ENCODE measurements at regions of chr14 and their contacts with region 1.

Region 1: DNA sequence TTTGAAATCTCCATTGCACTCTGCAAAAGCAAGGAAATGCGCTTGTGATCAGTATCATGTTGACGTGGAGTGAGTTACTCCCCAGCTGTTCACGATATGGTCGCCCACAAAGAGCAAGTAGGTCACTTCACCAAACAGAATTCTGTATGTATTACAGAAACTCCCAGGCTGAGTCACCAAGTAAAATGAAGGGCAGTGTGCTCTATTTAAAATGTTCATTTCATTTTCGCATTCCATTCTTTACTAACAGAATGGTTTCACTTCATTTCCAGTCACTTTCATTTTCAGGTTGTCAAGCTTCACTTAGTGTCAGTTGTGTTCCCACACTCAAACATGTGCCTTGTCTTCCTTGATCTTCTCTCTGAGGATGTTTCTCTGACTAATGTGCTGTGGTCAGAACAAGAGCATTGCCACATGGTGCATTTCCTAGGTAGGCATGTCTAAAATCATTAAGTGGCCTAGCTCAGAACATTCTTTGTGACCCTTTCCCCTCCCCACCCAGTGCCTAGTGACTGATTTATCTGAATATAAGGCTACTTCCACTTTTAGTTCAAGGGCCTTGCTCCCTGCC is 391.2 kb downstream of the RAD51B start:
- DNase-seq: peak; percentile 76
- ATAC-seq: peak; percentile 93
- H3K4me3 Mint-ChIP-seq: peak overlapping the region; percentile 58
- H3K27ac Mint-ChIP-seq: peak overlapping the region; percentile 83
- H3K4me1 Mint-ChIP-seq: peaks cover 67% of the 10 kb centered on the region
- H3K27me3 Mint-ChIP-seq: no peaks in the 10 kb centered on the region
- CTCF ChIP-seq: no peak

Region 2: DNA sequence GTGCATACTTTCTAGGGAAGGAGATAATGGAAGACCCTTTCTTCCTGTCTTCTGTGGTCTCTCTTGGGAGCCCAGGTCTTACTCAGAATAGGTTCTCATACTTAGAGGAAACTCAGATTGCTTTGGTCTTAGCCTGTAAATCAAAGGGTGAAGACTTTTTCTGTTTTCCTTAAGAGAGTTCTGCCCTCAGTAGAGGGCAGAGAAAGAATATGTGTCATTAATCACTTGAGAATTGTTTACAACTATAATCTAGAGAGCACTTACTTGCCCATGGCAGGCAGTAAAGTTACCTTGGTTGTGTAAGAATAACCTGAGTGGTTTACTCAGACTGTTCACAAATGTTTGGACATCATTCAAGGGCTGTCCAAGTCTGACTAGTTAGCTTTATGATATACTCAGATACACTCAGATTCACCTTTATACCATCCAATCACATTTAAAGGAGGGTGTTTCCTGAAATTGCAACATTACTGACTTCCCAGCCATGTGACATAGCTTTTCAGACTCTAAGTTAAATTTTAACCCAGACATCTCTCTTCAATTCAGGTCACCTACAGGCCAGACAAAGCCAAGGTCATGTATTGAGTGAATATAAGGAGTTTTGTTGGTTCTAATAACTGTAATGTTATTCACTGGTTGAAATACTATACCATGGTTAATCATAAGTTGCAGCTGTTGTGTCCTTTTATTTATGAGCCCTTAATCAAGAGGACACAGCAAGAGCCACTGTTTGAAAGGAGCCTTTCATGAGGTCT is 19.1 kb before region 1 on chr14:
- CTCF ChIA-PET with region 1: no interaction called
- POLR2A ChIA-PET with region 1: no interaction called
- intact Hi-C with region 1: no loop called
- DNase-seq: no peak
- ATAC-seq: no peak
- H3K4me3 Mint-ChIP-seq: no peak overlapping the region
- H3K27ac Mint-ChIP-seq: no peak overlapping the region
- H3K4me1 Mint-ChIP-seq: peaks cover 5% of the 10 kb centered on the region
- H3K27me3 Mint-ChIP-seq: no peaks in the 10 kb centered on the region
- CTCF ChIP-seq: no peak

Region 3: DNA sequence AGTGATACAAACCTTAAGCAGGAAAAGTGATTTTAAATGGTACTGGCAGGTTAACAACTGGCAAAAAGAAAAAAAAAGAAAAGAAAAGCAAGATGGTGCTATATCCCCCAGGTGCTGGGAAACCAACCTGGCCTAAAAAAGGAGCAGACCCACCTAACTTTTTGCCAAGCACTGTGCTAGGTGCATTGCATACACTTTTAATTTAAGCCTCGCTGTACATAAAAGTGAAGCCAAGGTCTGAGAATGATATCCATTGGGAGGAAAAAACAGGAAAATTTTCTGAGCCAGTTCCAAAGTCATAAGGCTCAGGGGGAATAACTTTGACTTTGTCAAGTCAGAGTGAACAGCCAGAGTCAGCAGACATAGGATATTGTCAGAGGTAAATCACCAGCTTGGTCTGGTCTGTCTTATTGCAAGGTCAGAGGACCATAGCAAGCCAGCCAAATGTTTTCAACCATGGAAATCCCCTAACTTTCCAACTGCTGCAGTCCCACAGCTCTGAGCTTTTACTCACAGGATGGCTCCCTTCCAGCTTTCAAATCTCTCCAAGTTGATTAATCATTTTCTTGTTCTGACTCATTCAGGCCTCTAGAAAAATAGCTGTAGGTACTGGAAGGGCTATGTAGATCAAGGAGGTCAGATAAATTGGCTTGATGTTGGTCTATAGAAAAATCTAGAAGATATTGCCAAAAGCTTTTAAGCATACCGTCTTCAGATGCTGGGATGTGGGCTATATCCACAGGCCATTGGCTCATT is 21.7 kb after region 1 on chr14:
- CTCF ChIA-PET with region 1: no interaction called
- POLR2A ChIA-PET with region 1: interaction called, 4 read pairs
- intact Hi-C with region 1: loop called (anchors 2 kb)
- DNase-seq: peak; percentile 67
- ATAC-seq: peak; percentile 92
- H3K4me3 Mint-ChIP-seq: no peak overlapping the region
- H3K27ac Mint-ChIP-seq: no peak overlapping the region
- H3K4me1 Mint-ChIP-seq: peaks cover 15% of the 10 kb centered on the region
- H3K27me3 Mint-ChIP-seq: no peaks in the 10 kb centered on the region
- CTCF ChIP-seq: no peak

Region 4: GRCh38 chr14:68392393-68393141 is 181.8 kb after region 1 on chr14:
- CTCF ChIA-PET with region 1: no interaction called
- POLR2A ChIA-PET with region 1: no interaction called
- intact Hi-C with region 1: no loop called
- DNase-seq: peak; percentile 20
- ATAC-seq: no peak
- H3K4me3 Mint-ChIP-seq: no peak overlapping the region
- H3K27ac Mint-ChIP-seq: no peak overlapping the region
- H3K4me1 Mint-ChIP-seq: peaks cover 2% of the 10 kb centered on the region
- H3K27me3 Mint-ChIP-seq: no peaks in the 10 kb centered on the region
- CTCF ChIP-seq: no peak

Region 5: DNA sequence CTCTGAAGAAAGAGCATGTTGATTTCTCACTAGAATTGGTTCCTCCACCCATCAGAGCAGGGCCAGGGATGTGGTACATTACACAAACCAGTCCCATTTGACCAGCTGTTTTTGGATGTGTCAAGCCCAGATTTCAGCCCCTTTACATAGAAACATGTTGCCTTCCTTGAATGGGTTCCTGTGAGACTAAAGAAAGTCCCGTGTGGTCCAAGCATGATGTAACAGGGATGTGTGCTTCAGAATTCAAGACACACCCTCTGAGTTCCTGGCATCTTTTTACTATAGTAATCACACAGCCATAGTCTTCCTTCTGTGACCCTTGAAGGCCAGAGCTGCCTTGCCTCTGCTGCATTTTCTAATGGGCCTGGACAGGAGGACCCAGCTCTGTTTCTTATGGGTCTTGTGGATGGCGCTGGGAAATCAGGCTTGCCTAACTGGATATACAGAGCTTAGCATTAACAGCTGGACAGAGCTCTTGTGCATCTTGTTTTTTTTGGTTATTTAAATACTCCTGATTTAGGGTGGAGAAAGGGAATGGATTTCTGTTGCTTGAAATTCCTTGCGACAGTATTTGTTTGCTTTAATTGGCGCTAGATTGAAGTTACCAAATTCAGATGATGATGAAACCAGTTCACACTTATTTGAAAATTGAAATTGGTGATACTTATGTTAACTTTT is 241.0 kb after region 1 on chr14:
- CTCF ChIA-PET with region 1: no interaction called
- POLR2A ChIA-PET with region 1: no interaction called
- intact Hi-C with region 1: no loop called
- DNase-seq: no peak
- ATAC-seq: no peak
- H3K4me3 Mint-ChIP-seq: no peak overlapping the region
- H3K27ac Mint-ChIP-seq: no peak overlapping the region
- H3K4me1 Mint-ChIP-seq: no peaks in the 10 kb centered on the region
- H3K27me3 Mint-ChIP-seq: no peaks in the 10 kb centered on the region
- CTCF ChIP-seq: no peak